Mammary epithelial cell (primary cell): ENCODE measurements at regions of chr2 and their contacts with region 1.

Region 1: GRCh38 chr2:142130111-142131009 is 456 bp downstream of the LRP1B start:
- DNase-seq: peak; percentile 69
- H3K4me3 ChIP-seq: peak overlapping the region; percentile 60 to 66 (median 65)
- H3K27ac ChIP-seq: peak overlapping the region; percentile 5
- H3K4me1 ChIP-seq: peaks cover 7% of the 10 kb centered on the region
- H3K27me3 ChIP-seq: peaks cover 4% of the 10 kb centered on the region
- CTCF ChIP-seq: no peak

Region 2: GRCh38 chr2:140891604-140892212 is 1238.7 kb before region 1 on chr2:
- CTCF ChIA-PET with region 1: no interaction called
- dilution Hi-C with region 1: no loop called
- in situ Hi-C with region 1: no loop called
- intact Hi-C with region 1: loop called (anchors 10 kb)
- DNase-seq: peak; percentile 12
- H3K4me3 ChIP-seq: no peak overlapping the region
- H3K27ac ChIP-seq: no peak overlapping the region
- H3K4me1 ChIP-seq: peaks cover 23% of the 10 kb centered on the region
- H3K27me3 ChIP-seq: no peaks in the 10 kb centered on the region
- CTCF ChIP-seq: peak; percentile 27 to 43

Region 3: GRCh38 chr2:141554810-141555209 is 575.5 kb before region 1 on chr2:
- CTCF ChIA-PET with region 1: no interaction called
- dilution Hi-C with region 1: no loop called
- in situ Hi-C with region 1: no loop called
- intact Hi-C with region 1: loop called (anchors 10 kb)
- DNase-seq: peak; percentile 45
- H3K4me3 ChIP-seq: no peak overlapping the region
- H3K27ac ChIP-seq: no peak overlapping the region
- H3K4me1 ChIP-seq: peaks cover 15% of the 10 kb centered on the region
- H3K27me3 ChIP-seq: no peaks in the 10 kb centered on the region
- CTCF ChIP-seq: peak; percentile 34 to 70

Region 4: DNA sequence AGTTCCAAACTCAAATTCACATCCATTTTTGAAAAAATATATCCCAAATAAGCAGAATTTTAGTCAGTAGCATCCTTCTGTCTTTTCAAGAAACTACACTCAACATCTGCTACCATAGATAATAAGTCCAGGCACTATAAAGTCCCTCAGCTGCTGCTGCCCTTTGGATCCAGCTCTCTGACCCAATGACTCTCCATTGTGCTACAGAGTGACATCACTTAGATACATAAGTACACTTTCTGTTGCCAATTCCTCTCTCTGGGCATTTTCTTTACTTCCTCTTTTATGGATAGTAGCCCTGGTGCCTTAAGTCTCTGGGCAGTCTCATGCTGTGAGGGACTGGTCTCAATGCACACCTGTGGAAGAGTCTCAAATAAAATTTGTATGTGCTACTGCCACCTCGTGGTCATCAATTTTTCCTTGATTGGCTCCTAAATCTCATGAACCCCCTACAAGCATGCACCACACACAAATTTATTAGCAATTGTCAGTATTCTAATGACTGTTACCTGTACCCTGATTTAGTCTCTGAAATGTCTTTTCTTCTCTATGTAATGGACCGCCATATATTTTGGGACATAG is 218.8 kb before region 1 on chr2:
- CTCF ChIA-PET with region 1: no interaction called
- dilution Hi-C with region 1: no loop called
- in situ Hi-C with region 1: no loop called
- intact Hi-C with region 1: loop called (anchors 10 kb)
- DNase-seq: peak; percentile 39
- H3K4me3 ChIP-seq: no peak overlapping the region
- H3K27ac ChIP-seq: no peak overlapping the region
- H3K4me1 ChIP-seq: peaks cover 4% of the 10 kb centered on the region
- H3K27me3 ChIP-seq: no peaks in the 10 kb centered on the region
- CTCF ChIP-seq: peak; percentile 40 to 46

Region 5: GRCh38 chr2:141942006-141942789 is 188.2 kb before region 1 on chr2:
- CTCF ChIA-PET with region 1: no interaction called
- dilution Hi-C with region 1: no loop called
- in situ Hi-C with region 1: no loop called
- intact Hi-C with region 1: loop called (anchors 10 kb)
- DNase-seq: no peak
- H3K4me3 ChIP-seq: no peak overlapping the region
- H3K27ac ChIP-seq: no peak overlapping the region
- H3K4me1 ChIP-seq: no peaks in the 10 kb centered on the region
- H3K27me3 ChIP-seq: no peaks in the 10 kb centered on the region
- CTCF ChIP-seq: peak; percentile 37 to 56

Region 6: GRCh38 chr2:141994066-141994465 is 136.3 kb before region 1 on chr2:
- CTCF ChIA-PET with region 1: no interaction called
- dilution Hi-C with region 1: no loop called
- in situ Hi-C with region 1: no loop called
- intact Hi-C with region 1: loop called (anchors 10 kb)
- DNase-seq: peak; percentile 23
- H3K4me3 ChIP-seq: no peak overlapping the region
- H3K27ac ChIP-seq: no peak overlapping the region
- H3K4me1 ChIP-seq: no peaks in the 10 kb centered on the region
- H3K27me3 ChIP-seq: no peaks in the 10 kb centered on the region
- CTCF ChIP-seq: no peak

Region 7: DNA sequence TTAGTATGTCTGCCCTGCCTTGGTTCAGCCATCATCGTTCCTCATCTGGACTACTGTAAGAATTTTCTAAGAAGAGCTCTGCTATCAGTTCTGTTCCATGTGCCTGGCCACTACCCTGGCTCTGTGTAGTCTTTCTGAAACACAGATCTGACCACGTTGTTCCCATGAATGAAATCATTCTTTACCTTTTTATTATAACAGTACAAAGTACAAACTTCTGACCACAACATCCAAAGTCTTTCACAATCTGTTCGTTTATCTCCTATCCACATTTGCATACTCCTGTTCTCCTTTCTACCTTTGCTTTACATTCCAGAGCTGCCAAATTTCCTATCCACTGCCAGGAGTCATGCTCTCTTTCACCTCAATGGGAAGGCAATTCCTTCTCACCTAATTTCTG is 285.1 kb after region 1 on chr2:
- CTCF ChIA-PET with region 1: no interaction called
- dilution Hi-C with region 1: no loop called
- in situ Hi-C with region 1: no loop called
- intact Hi-C with region 1: no loop called
- DNase-seq: no peak
- H3K4me3 ChIP-seq: no peak overlapping the region
- H3K27ac ChIP-seq: no peak overlapping the region
- H3K4me1 ChIP-seq: no peaks in the 10 kb centered on the region
- H3K27me3 ChIP-seq: no peaks in the 10 kb centered on the region
- CTCF ChIP-seq: no peak